CD4-positive, alpha-beta memory T cell (primary cell): ENCODE measurements at regions of chr6 and their contacts with region 1.

Region 1: GRCh38 chr6:35452186-35453090 is at the start of gene FANCE:
- DNase-seq: peak; percentile 77 to 90 (median 81)
- H3K4me3 ChIP-seq: peak within 1 kb of the TSS; percentile 0 to 66
- H3K4me3 Mint-ChIP-seq: peak within 1 kb of the TSS; percentile 84 to 91 (median 87)
- H3K27ac ChIP-seq: peak within 1 kb of the TSS; percentile 59
- H3K27ac Mint-ChIP-seq: peak within 1 kb of the TSS; percentile 54 to 94 (median 89)
- H3K4me1 ChIP-seq: peaks cover 40% of the 10 kb centered on the region
- H3K4me1 Mint-ChIP-seq: peaks cover 29 to 53% (median 39%) of the 10 kb centered on the region in 4 donors
- H3K27me3 ChIP-seq: no peaks in the 10 kb centered on the region
- H3K27me3 Mint-ChIP-seq: no peaks in the 10 kb centered on the region
- total RNA-seq, gene FANCE: 8.9 to 9.0 TPM

Region 2: DNA sequence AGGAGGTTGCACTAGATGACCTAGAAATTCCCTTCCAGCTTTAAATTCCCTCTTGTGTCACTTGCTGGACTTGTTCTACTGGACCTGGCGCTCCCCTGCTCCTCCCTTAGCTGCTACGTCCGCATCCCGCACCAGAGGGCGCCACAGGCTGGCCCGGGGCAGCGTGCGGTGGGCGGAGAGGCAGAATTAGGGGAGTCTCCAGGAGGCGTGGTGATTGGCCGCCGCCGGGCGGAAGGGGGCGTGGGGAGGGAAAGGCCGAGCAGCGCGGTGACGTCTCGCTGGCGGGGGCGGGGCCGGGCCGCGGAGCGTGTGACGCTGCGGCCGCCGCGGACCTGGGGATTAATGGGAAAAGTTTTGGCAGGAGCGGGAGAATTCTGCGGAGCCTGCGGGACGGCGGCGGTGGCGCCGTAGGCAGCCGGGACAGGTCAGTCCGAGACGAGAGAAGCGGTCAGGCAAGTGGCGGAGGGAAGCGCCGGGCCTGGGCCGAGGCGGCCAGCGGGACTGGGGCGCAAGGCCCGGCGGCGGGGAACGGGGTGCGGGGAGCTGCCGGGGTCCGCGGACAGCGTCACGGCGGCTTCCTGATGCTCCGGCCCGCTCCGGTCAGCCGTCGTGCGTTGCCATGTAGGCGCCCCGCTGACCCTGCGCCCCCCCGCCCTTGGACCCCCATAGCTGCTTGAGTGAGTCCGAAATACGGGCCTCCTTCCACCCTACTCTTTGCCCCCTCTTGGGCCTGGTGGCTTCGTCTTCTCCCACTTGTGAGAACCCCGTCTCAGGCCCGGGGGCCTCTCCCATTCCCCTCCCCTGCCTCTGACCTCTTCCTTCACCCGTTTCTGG is 110.0 kb before region 1 on chr6 and contains the start of gene PPARD:
- CTCF ChIA-PET with region 1: interaction called, 243 read pairs
- POLR2A ChIA-PET with region 1: interaction called, 58 read pairs
- intact Hi-C with region 1: loop called (anchors 1 kb)
- DNase-seq: peak; percentile 94 to 98 (median 95)
- H3K4me3 ChIP-seq: peak within 1 kb of the TSS; percentile 50 to 97
- H3K4me3 Mint-ChIP-seq: peak within 1 kb of the TSS; percentile 87 to 99 (median 96)
- H3K27ac ChIP-seq: peak within 1 kb of the TSS; percentile 86
- H3K27ac Mint-ChIP-seq: peak within 1 kb of the TSS; percentile 87 to 99 (median 96)
- H3K4me1 ChIP-seq: peaks cover 52% of the 10 kb centered on the region
- H3K4me1 Mint-ChIP-seq: peaks cover 37 to 60% (median 51%) of the 10 kb centered on the region in 4 donors
- H3K27me3 ChIP-seq: no peaks in the 10 kb centered on the region
- H3K27me3 Mint-ChIP-seq: no peaks in the 10 kb centered on the region
- total RNA-seq, gene PPARD: 37.2 to 38.7 TPM

Region 3: GRCh38 chr6:35391240-35391968 is 61.0 kb before region 1 on chr6:
- CTCF ChIA-PET with region 1: interaction called, 15 read pairs
- POLR2A ChIA-PET with region 1: interaction called, 4 read pairs
- intact Hi-C with region 1: no loop called
- DNase-seq: peak in 4 of 5 donors; percentile 25 to 62 (median 34)
- H3K4me3 ChIP-seq: no peak overlapping the region
- H3K4me3 Mint-ChIP-seq: peak overlapping the region in 4 of 8 donors; percentile 5 to 78 (median 22)
- H3K27ac ChIP-seq: no peak overlapping the region
- H3K27ac Mint-ChIP-seq: peak overlapping the region; percentile 45 to 85 (median 76)
- H3K4me1 ChIP-seq: peaks cover 42% of the 10 kb centered on the region
- H3K4me1 Mint-ChIP-seq: peaks cover 26 to 63% (median 44%) of the 10 kb centered on the region in 4 donors
- H3K27me3 ChIP-seq: no peaks in the 10 kb centered on the region
- H3K27me3 Mint-ChIP-seq: no peaks in the 10 kb centered on the region